ENCODE measurements at regions of chr15 and their contacts with region 1.

Region 1: GRCh38 chr15:88620995-88621772 is at the start of gene AEN:
- DNase-seq: peak; percentile 90 to 97 (median 93)
- ATAC-seq: peak; percentile 81
- H3K4me3 ChIP-seq: peak within 1 kb of the TSS; percentile 64 to 85
- H3K4me3 Mint-ChIP-seq: peak within 1 kb of the TSS; percentile 84
- H3K27ac ChIP-seq: peak within 1 kb of the TSS; percentile 61 to 75
- H3K27ac Mint-ChIP-seq: peak within 1 kb of the TSS; percentile 93
- H3K4me1 ChIP-seq: peaks cover 42% of the 10 kb centered on the region
- H3K4me1 Mint-ChIP-seq: peaks cover 49% of the 10 kb centered on the region
- H3K27me3 ChIP-seq: no peaks in the 10 kb centered on the region
- H3K27me3 Mint-ChIP-seq: peaks cover 2% of the 10 kb centered on the region
- CTCF ChIP-seq: no peak
- total RNA-seq, gene AEN: 26.9 to 27.7 TPM

Region 2: DNA sequence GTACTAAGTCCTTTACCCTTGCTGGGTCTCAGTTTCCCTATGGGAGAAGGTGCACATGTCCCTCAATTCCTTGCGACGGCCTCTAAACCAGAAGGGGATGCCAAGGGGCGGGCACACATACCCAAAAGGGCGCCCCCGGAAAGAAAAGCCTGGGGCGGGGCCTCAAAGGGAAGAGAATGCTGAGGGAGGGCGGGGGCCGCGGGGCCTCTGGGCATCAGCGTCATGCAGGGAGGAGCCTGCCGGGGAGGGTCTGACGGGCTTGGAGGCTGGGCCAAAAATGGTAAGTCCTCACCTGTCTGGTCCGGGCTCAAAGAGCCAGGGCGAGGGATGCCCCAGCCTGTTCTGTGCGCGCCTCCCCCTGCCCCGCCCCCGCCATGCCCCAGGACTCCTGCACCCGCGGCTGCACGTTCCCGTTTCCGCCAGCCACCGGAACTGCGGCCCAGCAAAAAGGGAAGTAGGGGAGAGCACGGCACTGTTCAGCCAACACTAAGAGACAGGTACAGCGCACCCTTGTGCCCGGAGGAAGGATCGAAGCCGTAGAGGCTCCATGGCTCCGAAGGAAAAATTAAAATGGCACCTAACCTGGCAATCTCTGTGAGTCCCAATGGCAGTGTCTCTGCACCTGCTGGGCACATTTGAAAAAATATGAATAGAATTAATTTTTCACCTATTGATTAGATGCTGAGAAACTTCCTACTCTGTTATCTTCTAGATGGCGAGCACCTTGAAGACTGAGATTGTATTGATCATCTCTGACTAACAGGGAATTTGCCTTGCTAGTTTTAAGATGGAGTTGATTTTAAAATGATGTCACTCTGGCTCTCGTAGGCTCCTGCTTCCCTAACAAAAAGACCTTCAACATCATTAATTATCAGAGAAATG is 74.7 kb before region 1 on chr15 and contains the start of gene DET1:
- CTCF ChIA-PET with region 1: no interaction called
- POLR2A ChIA-PET with region 1: no interaction called
- intact Hi-C with region 1: loop called (anchors 1 kb)
- DNase-seq: peak; percentile 87 to 98 (median 94)
- ATAC-seq: peak; percentile 91
- H3K4me3 ChIP-seq: peak within 1 kb of the TSS; percentile 60 to 62
- H3K4me3 Mint-ChIP-seq: peak within 1 kb of the TSS; percentile 91
- H3K27ac ChIP-seq: peak within 1 kb of the TSS; percentile 72 to 80
- H3K27ac Mint-ChIP-seq: peak within 1 kb of the TSS; percentile 96
- H3K4me1 ChIP-seq: peaks cover 6% of the 10 kb centered on the region
- H3K4me1 Mint-ChIP-seq: peaks cover 18% of the 10 kb centered on the region
- H3K27me3 ChIP-seq: no peaks in the 10 kb centered on the region
- H3K27me3 Mint-ChIP-seq: no peaks in the 10 kb centered on the region
- CTCF ChIP-seq: peak; percentile 70
- total RNA-seq, gene DET1: 1.4 to 2.0 TPM

Region 3: DNA sequence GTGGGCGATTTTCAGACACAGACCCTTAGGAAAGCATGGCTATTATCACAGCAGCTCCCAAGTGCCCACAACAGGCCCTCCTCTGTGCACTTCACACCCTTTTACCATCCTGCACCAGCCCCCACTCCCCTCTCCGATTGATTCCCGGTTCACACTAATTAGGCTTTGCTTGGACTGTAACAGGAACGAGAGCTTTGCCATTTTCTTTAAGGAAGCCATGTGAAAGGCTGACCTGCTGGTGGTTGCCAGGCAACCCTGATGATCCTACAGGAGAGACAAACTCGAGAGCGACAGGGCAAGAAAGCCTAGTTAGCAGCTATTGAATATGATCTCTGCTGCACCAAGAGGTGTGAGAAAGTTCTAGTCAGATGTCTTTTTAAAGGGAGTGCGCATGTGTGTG is 46.5 kb before region 1 on chr15:
- CTCF ChIA-PET with region 1: no interaction called
- POLR2A ChIA-PET with region 1: no interaction called
- intact Hi-C with region 1: no loop called
- DNase-seq: no peak
- ATAC-seq: no peak
- H3K4me3 ChIP-seq: no peak overlapping the region
- H3K4me3 Mint-ChIP-seq: no peak overlapping the region
- H3K27ac ChIP-seq: no peak overlapping the region
- H3K27ac Mint-ChIP-seq: no peak overlapping the region
- H3K4me1 ChIP-seq: no peaks in the 10 kb centered on the region
- H3K4me1 Mint-ChIP-seq: no peaks in the 10 kb centered on the region
- H3K27me3 ChIP-seq: no peaks in the 10 kb centered on the region
- H3K27me3 Mint-ChIP-seq: peaks cover 7% of the 10 kb centered on the region
- CTCF ChIP-seq: no peak

Region 4: DNA sequence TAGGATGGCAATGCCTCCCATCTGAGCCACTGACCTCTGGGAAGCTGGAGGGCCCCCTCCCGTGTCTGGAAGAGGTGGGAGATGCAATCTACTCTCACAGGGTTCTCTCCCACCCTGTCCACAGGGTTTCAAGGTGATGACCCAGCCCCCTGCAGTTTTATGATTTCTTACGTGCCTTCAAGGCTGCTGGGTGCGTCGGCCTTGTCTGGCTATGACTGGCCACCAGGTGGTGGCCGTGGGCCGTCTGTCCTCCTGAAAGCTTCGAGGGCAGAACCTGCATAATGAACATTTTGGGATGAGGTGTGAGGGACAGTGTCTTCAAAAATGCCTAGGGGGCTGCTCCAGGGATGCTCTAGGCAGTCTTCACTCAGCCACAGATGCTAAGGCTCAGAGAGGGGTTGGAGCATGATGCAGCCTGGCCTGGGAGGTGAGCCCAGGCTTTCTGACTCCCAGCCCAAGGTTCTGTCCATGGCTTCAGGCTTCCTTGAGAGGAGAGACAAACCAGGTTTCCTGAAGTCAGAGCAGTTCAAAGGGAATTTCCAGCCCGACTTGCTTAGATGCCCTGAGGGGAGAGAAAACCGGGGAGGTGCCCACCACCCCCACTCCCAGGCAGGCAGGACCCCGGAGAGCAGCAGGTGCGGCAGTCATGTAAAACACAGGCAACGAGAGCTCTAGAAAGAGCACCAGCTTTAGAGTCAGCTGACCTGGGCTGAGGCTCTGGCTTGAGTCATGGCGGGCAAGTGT is 36.3 kb after region 1 on chr15:
- CTCF ChIA-PET with region 1: interaction called, 114 read pairs
- POLR2A ChIA-PET with region 1: interaction called, 12 read pairs
- intact Hi-C with region 1: loop called in 1 of 2 experiments (anchors 2 kb)
- DNase-seq: peak in 3 of 9 experiments; percentile 31 to 47 (median 44)
- ATAC-seq: no peak
- H3K4me3 ChIP-seq: no peak overlapping the region
- H3K4me3 Mint-ChIP-seq: peak overlapping the region; percentile 22
- H3K27ac ChIP-seq: peak overlapping the region in 1 of 2 experiments; percentile 44
- H3K27ac Mint-ChIP-seq: peak overlapping the region; percentile 88
- H3K4me1 ChIP-seq: peaks cover 86% of the 10 kb centered on the region
- H3K4me1 Mint-ChIP-seq: peaks cover 82% of the 10 kb centered on the region
- H3K27me3 ChIP-seq: no peaks in the 10 kb centered on the region
- H3K27me3 Mint-ChIP-seq: no peaks in the 10 kb centered on the region
- CTCF ChIP-seq: no peak

Region 5: GRCh38 chr15:88791637-88792036 is 170.5 kb after region 1 on chr15:
- CTCF ChIA-PET with region 1: no interaction called
- POLR2A ChIA-PET with region 1: no interaction called
- intact Hi-C with region 1: no loop called
- DNase-seq: no peak
- ATAC-seq: no peak
- H3K4me3 ChIP-seq: no peak overlapping the region
- H3K4me3 Mint-ChIP-seq: no peak overlapping the region
- H3K27ac ChIP-seq: no peak overlapping the region
- H3K27ac Mint-ChIP-seq: no peak overlapping the region
- H3K4me1 ChIP-seq: no peaks in the 10 kb centered on the region
- H3K4me1 Mint-ChIP-seq: no peaks in the 10 kb centered on the region
- H3K27me3 ChIP-seq: peaks cover 0 to 3% of the 10 kb centered on the region in 2 experiments
- H3K27me3 Mint-ChIP-seq: peaks cover 41% of the 10 kb centered on the region
- CTCF ChIP-seq: no peak

Region 6: GRCh38 chr15:88834211-88834812 is 213.1 kb after region 1 on chr15:
- CTCF ChIA-PET with region 1: interaction called, 6 read pairs
- POLR2A ChIA-PET with region 1: no interaction called
- intact Hi-C with region 1: loop called (anchors 1 kb)
- DNase-seq: peak in 6 of 9 experiments; percentile 4 to 55 (median 38)
- ATAC-seq: no peak
- H3K4me3 ChIP-seq: no peak overlapping the region
- H3K4me3 Mint-ChIP-seq: no peak overlapping the region
- H3K27ac ChIP-seq: no peak overlapping the region
- H3K27ac Mint-ChIP-seq: no peak overlapping the region
- H3K4me1 ChIP-seq: no peaks in the 10 kb centered on the region
- H3K4me1 Mint-ChIP-seq: no peaks in the 10 kb centered on the region
- H3K27me3 ChIP-seq: no peaks in the 10 kb centered on the region
- H3K27me3 Mint-ChIP-seq: peaks cover 8% of the 10 kb centered on the region
- CTCF ChIP-seq: no peak

Region 7: DNA sequence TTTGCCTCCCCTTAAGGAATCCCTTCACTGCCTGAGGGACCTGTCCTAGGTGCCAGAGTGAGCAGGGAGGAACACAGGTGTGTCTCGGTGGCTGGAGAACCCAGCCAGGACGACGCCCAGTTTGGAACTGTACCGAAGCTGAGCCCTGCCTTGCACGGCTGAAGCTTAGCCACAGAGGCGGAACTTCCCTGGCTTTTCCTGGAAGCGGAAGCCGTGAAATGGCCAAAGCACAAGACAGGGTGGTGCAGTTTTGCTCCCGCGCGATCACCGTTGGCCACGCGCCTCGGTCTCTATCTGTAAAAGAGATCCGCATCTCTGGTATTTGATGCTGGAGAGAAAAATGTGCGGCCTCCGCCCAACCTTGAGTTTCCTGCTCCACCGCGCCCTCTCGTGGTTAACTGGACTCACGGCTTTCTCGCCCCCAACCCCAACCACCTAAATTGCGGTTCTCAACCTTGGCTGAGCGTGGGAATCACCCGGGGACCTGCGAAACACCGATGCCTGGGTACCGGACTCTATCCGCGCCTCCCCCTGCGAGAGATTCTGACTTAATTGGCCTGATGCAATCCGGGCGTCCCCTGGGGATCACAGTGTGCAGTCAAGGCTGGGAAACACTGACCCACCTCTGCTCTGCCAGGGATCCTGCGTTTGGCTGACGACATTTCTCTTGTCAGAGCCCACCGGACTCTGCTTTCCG is 396.3 kb after region 1 on chr15:
- CTCF ChIA-PET with region 1: interaction called, 4 read pairs
- POLR2A ChIA-PET with region 1: no interaction called
- intact Hi-C with region 1: loop called in 1 of 2 experiments (anchors 1 kb)
- DNase-seq: peak; percentile 71 to 92 (median 86)
- ATAC-seq: peak; percentile 96
- H3K4me3 ChIP-seq: peak overlapping the region; percentile 19 to 22
- H3K4me3 Mint-ChIP-seq: peak overlapping the region; percentile 68
- H3K27ac ChIP-seq: no peak overlapping the region
- H3K27ac Mint-ChIP-seq: peak overlapping the region; percentile 18
- H3K4me1 ChIP-seq: peaks cover 9% of the 10 kb centered on the region
- H3K4me1 Mint-ChIP-seq: peaks cover 12% of the 10 kb centered on the region
- H3K27me3 ChIP-seq: no peaks in the 10 kb centered on the region
- H3K27me3 Mint-ChIP-seq: peaks cover 5% of the 10 kb centered on the region
- CTCF ChIP-seq: peak; percentile 58

Region 8: GRCh38 chr15:89243691-89244471 is 622.7 kb after region 1 on chr15 and contains the start of gene FANCI:
- CTCF ChIA-PET with region 1: no interaction called
- POLR2A ChIA-PET with region 1: no interaction called
- intact Hi-C with region 1: loop called in 1 of 2 experiments (anchors 10 kb)
- DNase-seq: peak; percentile 93 to 98 (median 97)
- ATAC-seq: peak; percentile 98
- H3K4me3 ChIP-seq: peak within 1 kb of the TSS; percentile 77 to 85
- H3K4me3 Mint-ChIP-seq: peak within 1 kb of the TSS; percentile 95
- H3K27ac ChIP-seq: peak within 1 kb of the TSS; percentile 24 to 52
- H3K27ac Mint-ChIP-seq: peak within 1 kb of the TSS; percentile 90
- H3K4me1 ChIP-seq: peaks cover 15% of the 10 kb centered on the region
- H3K4me1 Mint-ChIP-seq: peaks cover 25% of the 10 kb centered on the region
- H3K27me3 ChIP-seq: no peaks in the 10 kb centered on the region
- H3K27me3 Mint-ChIP-seq: no peaks in the 10 kb centered on the region
- CTCF ChIP-seq: no peak
- total RNA-seq, gene FANCI: 5.1 to 6.3 TPM

Region 9: DNA sequence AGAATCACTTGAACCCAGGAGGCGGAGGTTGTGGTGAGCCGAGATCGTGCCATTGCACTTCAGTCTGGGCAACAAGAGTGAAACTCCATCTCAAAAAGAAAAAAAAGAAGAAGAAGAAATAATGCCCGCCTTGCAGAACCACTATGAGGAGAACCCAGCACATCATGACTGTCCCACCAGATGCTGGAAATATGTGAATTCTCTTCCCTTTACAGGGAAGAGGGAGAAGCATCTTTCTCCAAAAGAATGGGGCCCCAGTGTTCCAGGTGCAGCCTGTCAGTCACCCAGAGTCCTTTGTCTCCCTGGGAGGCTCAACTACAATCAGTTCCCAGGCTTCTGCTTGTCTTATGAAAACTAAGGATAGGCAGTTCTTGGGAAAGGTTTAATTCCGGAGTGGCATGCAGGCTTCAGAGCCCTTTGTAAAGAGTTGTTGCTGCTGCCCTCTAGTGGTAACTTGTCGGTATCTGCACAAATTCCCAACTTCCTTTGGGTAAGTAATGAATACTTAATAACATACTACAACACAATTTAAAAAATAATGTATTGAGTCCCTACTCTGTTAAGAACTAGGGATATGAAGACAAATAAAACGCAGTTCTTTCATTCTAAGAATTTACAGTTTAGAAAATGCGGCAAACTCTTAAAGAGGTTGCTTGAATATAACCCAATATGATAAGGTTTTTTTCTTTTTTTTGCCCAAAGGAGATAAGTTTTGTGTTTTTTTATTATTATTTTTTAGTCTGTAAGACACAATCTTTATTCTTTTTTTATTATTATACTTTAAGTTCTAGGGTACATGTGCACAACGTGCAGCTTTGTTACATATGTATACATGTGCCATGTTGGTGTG is 935.5 kb after region 1 on chr15:
- CTCF ChIA-PET with region 1: no interaction called
- POLR2A ChIA-PET with region 1: no interaction called
- intact Hi-C with region 1: no loop called
- DNase-seq: peak in 7 of 9 experiments; percentile 16 to 66 (median 49)
- ATAC-seq: no peak
- H3K4me3 ChIP-seq: no peak overlapping the region
- H3K4me3 Mint-ChIP-seq: no peak overlapping the region
- H3K27ac ChIP-seq: no peak overlapping the region
- H3K27ac Mint-ChIP-seq: no peak overlapping the region
- H3K4me1 ChIP-seq: no peaks in the 10 kb centered on the region
- H3K4me1 Mint-ChIP-seq: no peaks in the 10 kb centered on the region
- H3K27me3 ChIP-seq: no peaks in the 10 kb centered on the region
- H3K27me3 Mint-ChIP-seq: peaks cover 16% of the 10 kb centered on the region
- CTCF ChIP-seq: peak; percentile 85

Measured in CD8-positive, alpha-beta T cell (primary cell).